Aorta (tissue), 5 donors: ENCODE measurements at regions of chr5 and their contacts with region 1.

Region 1: GRCh38 chr5:902129-902916 is 9.6 kb downstream of the TRIP13 start:
- DNase-seq: peak in 1 of 2 donors; percentile 25
- ATAC-seq: no peak
- H3K4me3 ChIP-seq: no peak overlapping the region
- H3K27ac ChIP-seq: no peak overlapping the region
- H3K4me1 ChIP-seq: no peaks in the 10 kb centered on the region
- H3K27me3 ChIP-seq: no peaks in the 10 kb centered on the region

Region 2: DNA sequence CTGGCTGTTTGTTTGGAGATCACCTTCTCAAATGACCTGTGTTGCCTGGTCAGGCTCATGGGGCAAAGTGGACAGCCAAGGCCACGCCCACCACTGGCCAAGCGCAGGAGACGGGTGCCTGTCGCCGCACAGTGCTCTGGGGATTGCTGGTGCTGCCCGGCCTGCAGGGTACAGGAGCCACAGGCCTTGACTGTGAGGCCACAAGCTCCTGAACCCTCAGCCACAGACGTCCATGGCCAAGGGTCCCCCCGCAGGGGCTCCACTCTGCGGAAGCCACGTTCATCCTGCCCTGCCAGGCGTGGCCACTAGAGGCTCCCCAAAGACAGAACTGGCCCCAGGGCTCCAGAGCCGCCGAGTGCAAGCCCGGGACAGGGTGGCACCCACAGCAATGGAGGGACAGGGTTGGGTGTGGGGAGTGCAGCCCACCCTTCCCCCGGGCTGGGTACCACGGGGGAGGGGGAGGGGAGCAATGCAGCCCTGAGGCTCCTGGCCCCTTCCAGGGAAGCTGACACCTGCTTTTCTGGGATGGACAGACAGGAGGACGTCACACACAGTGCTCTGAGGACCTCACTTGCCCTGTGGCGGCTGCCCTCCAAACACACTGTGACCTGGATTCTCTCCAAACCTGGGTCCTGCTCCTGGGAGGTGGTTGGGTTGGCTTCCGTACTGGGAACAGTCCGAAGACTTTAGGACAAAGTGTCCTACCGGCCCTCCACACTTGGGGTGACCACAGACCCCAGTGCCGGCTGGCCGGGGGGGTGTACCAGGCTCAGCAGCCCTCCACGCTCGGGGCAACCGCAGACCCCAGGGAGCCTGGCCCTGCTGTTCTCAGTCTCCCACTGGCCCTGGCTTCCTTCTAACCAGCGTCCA is 230.6 kb before region 1 on chr5:
- intact Hi-C with region 1: loop called (anchors 2 to 5 kb)
- DNase-seq: peak; percentile 75 to 89
- ATAC-seq: peak; percentile 87
- H3K4me3 ChIP-seq: no peak overlapping the region
- H3K27ac ChIP-seq: no peak overlapping the region
- H3K4me1 ChIP-seq: no peaks in the 10 kb centered on the region
- H3K27me3 ChIP-seq: no peaks in the 10 kb centered on the region

Region 3: DNA sequence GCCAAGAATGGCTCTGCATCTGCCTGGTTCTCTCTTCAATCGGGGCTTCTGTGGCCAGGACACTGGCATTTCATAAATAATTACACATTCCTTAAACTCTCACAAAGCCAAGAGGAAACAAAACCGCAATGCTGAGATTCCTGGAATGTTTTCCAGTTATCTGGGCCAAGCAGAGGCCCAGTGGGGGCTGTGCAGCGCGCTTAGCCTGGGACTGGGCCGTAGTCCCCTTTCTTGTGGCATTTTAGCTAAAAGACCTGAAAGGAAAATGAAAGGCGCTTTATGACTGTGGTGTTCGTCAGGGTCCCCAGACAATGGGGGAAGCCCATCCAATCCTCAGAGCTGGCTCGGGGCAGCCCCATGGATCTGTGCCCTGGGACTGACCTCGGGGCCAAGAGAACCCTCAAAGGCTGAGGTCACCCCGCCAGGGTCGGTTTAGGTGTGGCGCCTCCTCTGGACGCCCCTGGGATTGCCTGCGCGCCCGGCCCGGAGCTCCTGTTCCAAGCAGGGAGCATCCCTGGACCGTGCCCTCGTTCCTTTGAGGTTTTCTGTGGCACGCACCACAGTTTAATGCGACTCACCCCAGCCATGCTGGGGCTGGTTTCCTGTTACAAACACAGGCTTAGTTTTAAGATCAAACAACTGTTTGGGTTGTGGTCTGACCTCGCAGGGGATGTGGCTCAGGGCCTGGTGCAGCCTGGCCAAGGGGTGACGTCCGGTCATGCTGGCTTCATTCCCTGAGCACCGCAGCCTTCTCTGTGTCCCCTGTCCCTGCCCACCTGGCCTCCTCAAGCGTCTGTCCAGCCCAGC is 54.8 kb after region 1 on chr5:
- intact Hi-C with region 1: no loop called
- DNase-seq: peak in 1 of 2 donors; percentile 54
- ATAC-seq: no peak
- H3K4me3 ChIP-seq: no peak overlapping the region
- H3K27ac ChIP-seq: no peak overlapping the region
- H3K4me1 ChIP-seq: no peaks in the 10 kb centered on the region
- H3K27me3 ChIP-seq: no peaks in the 10 kb centered on the region